Activated CD4-positive, alpha-beta memory T cell treated with anti-CD3 and anti-CD28 coated beads, Interleukin-2, amount 10 ng/mL, durations not matched to agents 7 days and 5 days (primary cell): ENCODE measurements at regions of chr11 and their contacts with region 1.

Region 1: GRCh38 chr11:122781378-122782195 is 56.7 kb upstream of the CRTAM start:
- DNase-seq: peak; percentile 74
- H3K4me3 Mint-ChIP-seq: no peak overlapping the region
- H3K27ac Mint-ChIP-seq: no peak overlapping the region
- H3K4me1 Mint-ChIP-seq: peaks cover 4% of the 10 kb centered on the region
- H3K27me3 Mint-ChIP-seq: no peaks in the 10 kb centered on the region

Region 2: DNA sequence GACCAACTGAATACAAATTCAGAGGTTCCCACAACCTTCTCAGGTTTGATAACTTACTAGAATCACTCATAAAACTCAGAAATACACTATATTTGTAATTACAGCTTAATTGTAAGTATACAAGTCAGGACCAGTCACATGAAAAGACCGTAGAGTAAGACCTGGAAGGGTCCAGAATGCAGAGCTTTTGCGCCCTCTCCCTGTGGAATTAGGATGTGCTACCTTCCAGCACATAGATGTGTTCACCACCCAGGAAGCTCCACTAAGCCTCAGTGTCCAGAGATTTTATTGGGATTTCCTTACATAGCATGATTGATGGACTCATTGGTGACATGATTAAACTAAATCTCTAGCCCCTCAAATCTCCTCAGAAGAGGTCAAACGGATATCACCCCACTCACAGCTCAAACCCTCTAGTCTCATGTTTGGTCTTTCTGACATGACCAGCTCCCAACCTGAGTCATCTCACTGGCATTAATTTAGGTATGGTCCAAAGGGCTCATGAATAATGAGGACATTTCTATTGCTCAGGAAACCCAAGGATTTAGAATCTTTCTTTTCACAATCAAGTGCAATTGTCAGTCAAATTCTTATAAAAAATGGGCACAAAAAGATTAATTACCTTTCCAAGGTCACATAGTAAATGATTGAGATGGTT is 203.3 kb before region 1 on chr11:
- CTCF ChIA-PET with region 1: interaction called, 32 read pairs
- POLR2A ChIA-PET with region 1: no interaction called
- DNase-seq: no peak
- H3K4me3 Mint-ChIP-seq: no peak overlapping the region
- H3K27ac Mint-ChIP-seq: no peak overlapping the region
- H3K4me1 Mint-ChIP-seq: peaks cover 5% of the 10 kb centered on the region
- H3K27me3 Mint-ChIP-seq: peaks cover 16% of the 10 kb centered on the region

Region 3: DNA sequence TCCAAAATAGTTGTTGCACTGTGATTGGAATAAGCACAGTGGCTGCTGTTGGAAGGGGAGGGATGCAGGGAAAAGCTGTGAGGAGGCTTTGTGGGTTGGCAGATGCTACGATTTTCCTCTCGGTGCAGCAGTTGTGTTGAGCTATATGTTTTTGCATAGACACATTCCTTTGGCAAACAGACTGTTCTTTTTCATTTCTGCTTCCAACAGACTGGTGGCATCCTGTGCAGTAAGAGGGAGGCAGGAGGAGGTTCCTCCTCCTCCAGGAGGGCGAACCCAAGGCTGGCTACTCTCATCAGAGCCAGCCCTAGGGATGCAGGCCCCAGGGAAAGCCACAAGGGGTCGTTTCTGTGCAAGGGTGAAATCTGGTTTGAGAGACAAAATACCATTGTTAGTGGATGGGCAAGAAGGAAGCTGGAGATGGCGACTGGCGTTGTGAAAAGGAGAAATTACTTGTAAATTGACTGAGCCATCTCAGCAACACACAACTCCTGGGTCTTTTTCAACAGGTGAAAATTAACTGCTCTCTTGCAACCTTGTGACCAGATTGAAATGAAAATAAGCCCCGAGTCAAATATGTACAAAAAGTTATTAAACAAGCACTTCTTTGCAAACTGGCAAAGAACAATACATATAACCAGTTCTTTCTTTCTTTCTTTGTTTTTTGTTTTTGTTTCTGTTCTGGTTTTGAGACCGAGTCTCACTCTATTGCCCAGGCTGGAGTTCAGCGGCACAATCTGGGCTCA is 152.6 kb before region 1 on chr11:
- CTCF ChIA-PET with region 1: interaction called, 73 read pairs
- POLR2A ChIA-PET with region 1: no interaction called
- DNase-seq: peak; percentile 67
- H3K4me3 Mint-ChIP-seq: no peak overlapping the region
- H3K27ac Mint-ChIP-seq: no peak overlapping the region
- H3K4me1 Mint-ChIP-seq: peaks cover 5% of the 10 kb centered on the region
- H3K27me3 Mint-ChIP-seq: peaks cover 9% of the 10 kb centered on the region

Region 4: DNA sequence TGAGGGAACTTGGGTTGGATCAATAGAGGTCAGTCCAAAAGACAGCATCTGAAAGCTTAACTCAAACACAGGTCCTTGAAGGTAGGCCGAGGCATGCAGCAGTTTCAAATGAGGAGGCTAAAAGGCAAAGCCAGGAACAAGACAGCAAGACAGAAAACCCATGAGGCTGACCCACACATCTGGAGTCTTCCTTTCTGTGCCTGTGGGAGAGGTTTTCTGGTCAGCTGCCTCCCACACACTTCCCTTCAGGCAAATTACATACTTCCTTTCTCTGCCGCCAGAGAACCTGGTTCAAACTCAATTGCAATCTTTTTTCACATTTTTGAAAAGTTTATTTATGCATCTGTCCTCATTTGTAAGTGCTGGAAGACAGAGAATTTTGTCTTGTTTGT is 26.9 kb after region 1 on chr11:
- CTCF ChIA-PET with region 1: no interaction called
- POLR2A ChIA-PET with region 1: no interaction called
- DNase-seq: no peak
- H3K4me3 Mint-ChIP-seq: no peak overlapping the region
- H3K27ac Mint-ChIP-seq: no peak overlapping the region
- H3K4me1 Mint-ChIP-seq: peaks cover 13% of the 10 kb centered on the region
- H3K27me3 Mint-ChIP-seq: no peaks in the 10 kb centered on the region

Region 5: DNA sequence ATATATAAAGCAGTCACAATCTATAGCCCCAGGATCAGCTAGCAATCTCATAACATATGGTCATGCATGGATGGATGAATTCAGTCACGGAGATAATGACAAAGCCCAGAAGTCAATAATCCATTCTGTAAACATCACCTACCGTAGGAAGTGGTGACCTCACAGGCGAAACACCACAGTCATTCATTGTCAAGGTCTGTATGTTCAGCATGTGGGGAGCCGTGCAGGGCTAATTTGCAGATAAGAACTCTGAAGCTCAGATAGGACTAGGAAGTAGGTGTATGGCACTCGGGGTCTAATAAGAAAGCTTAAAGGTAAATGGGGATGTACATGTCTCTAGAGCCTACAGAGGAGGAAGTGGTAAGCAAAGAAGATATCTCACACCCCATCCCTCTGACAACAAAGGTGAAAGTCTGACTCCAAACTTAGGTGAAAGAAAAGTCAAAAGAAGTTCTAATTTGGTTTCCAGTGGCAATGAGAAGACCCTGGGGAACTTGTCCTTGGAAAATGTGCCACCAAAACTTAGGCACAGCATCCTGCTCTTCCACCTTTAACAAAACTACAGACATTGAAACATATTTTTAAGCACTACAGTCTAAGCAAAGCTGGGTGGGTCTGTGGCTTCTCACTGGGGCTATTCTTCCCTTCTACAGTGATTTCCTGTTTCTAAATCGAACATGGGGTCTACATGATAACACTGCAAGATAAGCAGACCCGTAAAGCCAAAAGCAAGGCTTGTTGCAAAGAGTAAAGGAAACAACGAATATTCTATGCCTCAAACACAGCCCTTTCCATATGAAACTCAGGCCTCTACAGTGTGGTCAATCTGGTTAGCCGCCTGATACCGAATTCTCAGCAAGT is 61.9 kb after region 1 on chr11:
- CTCF ChIA-PET with region 1: no interaction called
- POLR2A ChIA-PET with region 1: no interaction called
- DNase-seq: peak; percentile 34
- H3K4me3 Mint-ChIP-seq: no peak overlapping the region
- H3K27ac Mint-ChIP-seq: peak overlapping the region; percentile 62
- H3K4me1 Mint-ChIP-seq: peaks cover 20% of the 10 kb centered on the region
- H3K27me3 Mint-ChIP-seq: peaks cover 3% of the 10 kb centered on the region